ENCODE measurements at regions of chr19 and their contacts with region 1.

Region 1: DNA sequence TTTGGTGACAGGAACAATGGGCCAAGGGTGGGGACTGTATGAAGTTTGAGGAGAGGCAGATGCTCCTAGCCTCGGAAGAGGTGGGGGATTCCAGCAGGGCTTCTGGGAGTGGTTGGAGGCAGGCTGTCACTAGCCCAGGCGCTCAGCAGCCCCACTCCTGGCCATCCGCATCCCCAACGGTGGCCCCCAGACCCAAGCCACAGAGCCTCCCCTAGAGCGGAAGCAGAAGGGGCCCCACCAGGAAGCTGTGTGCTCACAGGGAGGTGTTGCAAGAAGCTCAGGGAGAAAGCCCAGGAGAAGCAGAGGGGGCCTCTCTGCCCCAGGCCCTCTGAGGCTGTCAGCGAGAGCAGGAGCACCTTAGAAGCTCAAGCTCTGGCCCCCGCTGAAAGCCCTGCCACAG is 8.3 kb downstream of the PRAM1 start:
- DNase-seq: peak in 2 of 14 experiments; percentile 24 to 35
- ATAC-seq: peak; percentile 47
- H3K4me3 ChIP-seq: no peak overlapping the region
- H3K4me3 Mint-ChIP-seq: no peak overlapping the region
- H3K27ac ChIP-seq: peak overlapping the region in 1 of 2 donors; percentile 10
- H3K27ac Mint-ChIP-seq: peak overlapping the region; percentile 79
- H3K4me1 ChIP-seq: peaks cover 17% of the 10 kb centered on the region
- H3K4me1 Mint-ChIP-seq: peaks cover 16% of the 10 kb centered on the region
- H3K27me3 ChIP-seq: no peaks in the 10 kb centered on the region
- H3K27me3 Mint-ChIP-seq: no peaks in the 10 kb centered on the region
- CTCF ChIP-seq: no peak

Region 2: GRCh38 chr19:6935069-6935468 is 1559.1 kb before region 1 on chr19:
- CTCF ChIA-PET with region 1: no interaction called
- POLR2A ChIA-PET with region 1: no interaction called
- intact Hi-C with region 1: no loop called
- DNase-seq: no peak
- ATAC-seq: no peak
- H3K4me3 ChIP-seq: no peak overlapping the region
- H3K4me3 Mint-ChIP-seq: no peak overlapping the region
- H3K27ac ChIP-seq: no peak overlapping the region
- H3K27ac Mint-ChIP-seq: no peak overlapping the region
- H3K4me1 ChIP-seq: no peaks in the 10 kb centered on the region
- H3K4me1 Mint-ChIP-seq: no peaks in the 10 kb centered on the region
- H3K27me3 ChIP-seq: no peaks in the 10 kb centered on the region
- H3K27me3 Mint-ChIP-seq: no peaks in the 10 kb centered on the region
- CTCF ChIP-seq: no peak

Region 3: GRCh38 chr19:8505680-8506401 is 11.7 kb after region 1 on chr19:
- CTCF ChIA-PET with region 1: interaction called, 3 read pairs
- POLR2A ChIA-PET with region 1: interaction called, 10 read pairs
- intact Hi-C with region 1: no loop called
- DNase-seq: peak; percentile 47 to 86 (median 67)
- ATAC-seq: peak; percentile 77
- H3K4me3 ChIP-seq: peak overlapping the region; percentile 75
- H3K4me3 Mint-ChIP-seq: peak overlapping the region; percentile 93
- H3K27ac ChIP-seq: peak overlapping the region; percentile 5 to 46
- H3K27ac Mint-ChIP-seq: peak overlapping the region; percentile 85
- H3K4me1 ChIP-seq: peaks cover 40% of the 10 kb centered on the region
- H3K4me1 Mint-ChIP-seq: peaks cover 22% of the 10 kb centered on the region
- H3K27me3 ChIP-seq: no peaks in the 10 kb centered on the region
- H3K27me3 Mint-ChIP-seq: no peaks in the 10 kb centered on the region
- CTCF ChIP-seq: peak; percentile 73